PC-3 (cell line): ENCODE measurements at regions of chr1 and their contacts with region 1.

Region 1: DNA sequence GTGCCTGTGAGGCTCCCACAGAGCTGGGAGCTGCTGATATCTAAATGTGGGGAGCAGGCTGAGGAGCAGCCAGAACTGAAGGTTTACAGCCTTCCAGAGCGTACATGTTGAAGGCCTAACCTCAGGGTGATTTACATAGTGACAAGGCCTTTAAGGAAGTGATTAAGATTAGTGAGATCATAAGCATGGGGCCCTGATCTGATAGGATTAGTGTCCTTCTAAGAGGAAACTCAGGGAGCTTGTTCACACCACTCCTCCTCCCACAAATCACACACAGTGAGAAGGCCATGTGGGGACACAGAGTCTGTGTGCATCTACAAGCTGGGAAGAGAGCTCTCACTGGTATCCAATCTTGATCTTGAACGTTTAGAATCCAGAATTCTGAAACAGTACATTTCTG is 92.3 kb upstream of the NBPF6 start:
- DNase-seq: peak; percentile 4
- ATAC-seq: no peak
- H3K4me3 ChIP-seq: no peak overlapping the region
- H3K27ac ChIP-seq: no peak overlapping the region
- H3K4me1 ChIP-seq: no peaks in the 10 kb centered on the region
- H3K27me3 ChIP-seq: no peaks in the 10 kb centered on the region
- CTCF ChIP-seq: no peak

Region 2: GRCh38 chr1:108125312-108126138 is 232.3 kb before region 1 on chr1:
- CTCF ChIA-PET with region 1: no interaction called
- POLR2A ChIA-PET with region 1: no interaction called
- intact Hi-C with region 1: no loop called
- DNase-seq: peak; percentile 76
- ATAC-seq: peak; percentile 91
- H3K4me3 ChIP-seq: no peak overlapping the region
- H3K27ac ChIP-seq: no peak overlapping the region
- H3K4me1 ChIP-seq: peaks cover 7% of the 10 kb centered on the region
- H3K27me3 ChIP-seq: no peaks in the 10 kb centered on the region
- CTCF ChIP-seq: peak; percentile 92

Region 3: GRCh38 chr1:108502138-108502537 is 144.3 kb after region 1 on chr1:
- CTCF ChIA-PET with region 1: no interaction called
- POLR2A ChIA-PET with region 1: interaction called, 14 read pairs
- intact Hi-C with region 1: no loop called
- DNase-seq: no peak
- ATAC-seq: no peak
- H3K4me3 ChIP-seq: no peak overlapping the region
- H3K27ac ChIP-seq: no peak overlapping the region
- H3K4me1 ChIP-seq: peaks cover 12% of the 10 kb centered on the region
- H3K27me3 ChIP-seq: no peaks in the 10 kb centered on the region
- CTCF ChIP-seq: no peak